K562 (cell line): ENCODE measurements at regions of chr16 and their contacts with region 1.

Region 1: DNA sequence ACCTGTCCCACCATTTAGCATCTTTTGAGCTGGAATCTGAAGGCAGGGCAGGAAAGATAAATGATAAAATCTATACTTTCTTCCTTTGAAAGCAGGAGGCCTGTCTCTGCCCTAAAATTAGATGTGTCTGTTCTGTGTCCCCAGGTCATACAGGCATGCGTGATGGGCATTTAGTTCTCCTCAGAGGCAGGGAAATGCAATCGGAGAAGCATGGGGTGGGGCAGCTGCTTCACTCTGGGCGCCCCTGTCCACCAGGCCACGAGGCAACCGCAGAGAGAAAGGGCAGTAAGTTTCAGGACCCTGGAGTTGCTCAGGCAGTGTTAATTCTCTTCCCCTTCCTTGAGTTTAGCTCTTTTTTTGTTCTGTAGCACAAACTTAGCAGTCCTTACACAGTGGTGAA is 25.1 kb downstream of the CLUAP1 start:
- DNase-seq: no peak
- ATAC-seq: no peak
- H3K4me3 ChIP-seq: no peak overlapping the region
- H3K27ac ChIP-seq: no peak overlapping the region
- H3K4me1 ChIP-seq: 0 out of 5 replicates have a peak, but pooled peaks cover 0 to under 1% of the 10 kb centered on the region in 2 experiments
- H3K27me3 ChIP-seq: no peaks in the 10 kb centered on the region
- CTCF ChIP-seq: no peak
- EP300 ChIP-seq: no peak
- POLR2A ChIP-seq: no peak
- RAD21 ChIP-seq: no peak

Region 2: DNA sequence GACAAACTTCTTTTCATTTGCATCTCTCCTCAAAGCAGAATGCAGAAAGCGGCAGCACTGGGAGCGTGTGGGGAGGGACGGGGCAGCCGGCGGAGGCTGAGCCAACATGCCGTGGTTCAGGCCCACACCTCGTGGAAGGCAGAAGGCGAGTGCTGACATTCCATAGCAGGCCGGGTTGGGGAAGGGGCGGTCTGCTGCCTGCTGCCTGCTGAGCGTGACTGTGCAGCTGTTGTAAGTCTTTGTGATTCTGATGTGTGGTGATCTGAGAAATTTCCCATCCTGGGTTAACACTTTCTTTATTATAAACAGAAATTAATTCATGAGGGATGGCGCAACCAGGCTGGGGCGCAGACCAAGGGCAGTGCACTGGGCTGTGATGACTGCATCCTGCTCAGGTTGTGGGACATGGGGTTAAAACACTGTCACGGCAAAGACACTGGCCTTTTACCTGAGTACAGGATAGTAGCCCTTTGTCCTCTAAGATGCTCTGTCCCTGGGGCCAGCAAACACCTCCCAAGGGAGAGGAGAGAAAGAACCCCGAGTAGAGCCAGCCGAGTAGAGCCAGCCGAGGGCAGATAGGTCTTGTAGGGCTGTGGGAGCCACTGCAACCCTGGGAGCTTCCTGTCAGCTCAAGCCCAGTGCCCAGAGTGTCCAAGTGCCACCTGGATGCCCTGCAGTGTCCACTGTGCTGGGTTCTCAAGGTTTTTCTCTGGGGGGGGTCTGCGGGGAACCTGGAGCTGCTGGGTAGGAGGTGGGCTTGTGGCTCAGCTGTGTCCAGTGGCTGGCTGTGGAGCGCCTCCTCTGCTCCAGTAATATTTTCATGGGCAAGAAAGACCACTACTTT is 119.8 kb after region 1 on chr16:
- CTCF ChIA-PET with region 1: no interaction called
- POLR2A ChIA-PET with region 1: no interaction called
- in situ Hi-C with region 1: no loop called
- intact Hi-C with region 1: loop called (anchors 5 kb)
- DNase-seq: peak in 3 of 4 experiments; percentile 10 to 20 (median 13)
- ATAC-seq: peak; percentile 12; the same call in 2 of the 3 replicates
- H3K4me3 ChIP-seq: no peak overlapping the region
- H3K27ac ChIP-seq: peak overlapping the region; percentile 37; the same call in 1 of the 3 replicates
- H3K4me1 ChIP-seq: peaks cover 33 to 45% of the 10 kb centered on the region in 2 experiments
- H3K27me3 ChIP-seq: no peaks in the 10 kb centered on the region
- CTCF ChIP-seq: no peak
- EP300 ChIP-seq: no peak
- POLR2A ChIP-seq: no peak
- RAD21 ChIP-seq: no peak